ENCODE measurements at regions of chr9 and their contacts with region 1.

Region 1: GRCh38 chr9:99906403-99907207 is at the start of gene STX17:
- DNase-seq: peak; percentile 85
- ATAC-seq: peak; percentile 92
- H3K4me3 Mint-ChIP-seq: peak within 1 kb of the TSS; percentile 97
- H3K27ac Mint-ChIP-seq: peak within 1 kb of the TSS; percentile 96
- H3K4me1 Mint-ChIP-seq: peaks cover 26% of the 10 kb centered on the region
- H3K27me3 Mint-ChIP-seq: peaks cover 2% of the 10 kb centered on the region
- total RNA-seq, gene STX17: 32.8 to 35.2 TPM

Region 2: GRCh38 chr9:99221621-99222415 is 684.8 kb before region 1 on chr9 and contains the starts of genes ALG2 and SEC61B:
- CTCF ChIA-PET with region 1: no interaction called
- POLR2A ChIA-PET with region 1: no interaction called
- intact Hi-C with region 1: loop called in 1 of 2 experiments (anchors 2 kb)
- DNase-seq: peak; percentile 97
- ATAC-seq: peak; percentile 94
- H3K4me3 Mint-ChIP-seq: peak within 1 kb of the TSS; percentile 99
- H3K27ac Mint-ChIP-seq: peak within 1 kb of the TSS; percentile 99
- H3K4me1 Mint-ChIP-seq: peaks cover 67% of the 10 kb centered on the region
- H3K27me3 Mint-ChIP-seq: no peaks in the 10 kb centered on the region
- total RNA-seq, gene ALG2: 22.8 to 31.1 TPM
- total RNA-seq, gene SEC61B: 81.0 to 139 TPM

Region 3: GRCh38 chr9:99954819-99955218 is 48.2 kb after region 1 on chr9:
- CTCF ChIA-PET with region 1: no interaction called
- POLR2A ChIA-PET with region 1: no interaction called
- intact Hi-C with region 1: loop called in 1 of 2 experiments (anchors 1 kb)
- DNase-seq: no peak
- ATAC-seq: peak; percentile 91
- H3K4me3 Mint-ChIP-seq: no peak overlapping the region
- H3K27ac Mint-ChIP-seq: peak overlapping the region; percentile 47
- H3K4me1 Mint-ChIP-seq: peaks cover 28% of the 10 kb centered on the region
- H3K27me3 Mint-ChIP-seq: no peaks in the 10 kb centered on the region

Region 4: DNA sequence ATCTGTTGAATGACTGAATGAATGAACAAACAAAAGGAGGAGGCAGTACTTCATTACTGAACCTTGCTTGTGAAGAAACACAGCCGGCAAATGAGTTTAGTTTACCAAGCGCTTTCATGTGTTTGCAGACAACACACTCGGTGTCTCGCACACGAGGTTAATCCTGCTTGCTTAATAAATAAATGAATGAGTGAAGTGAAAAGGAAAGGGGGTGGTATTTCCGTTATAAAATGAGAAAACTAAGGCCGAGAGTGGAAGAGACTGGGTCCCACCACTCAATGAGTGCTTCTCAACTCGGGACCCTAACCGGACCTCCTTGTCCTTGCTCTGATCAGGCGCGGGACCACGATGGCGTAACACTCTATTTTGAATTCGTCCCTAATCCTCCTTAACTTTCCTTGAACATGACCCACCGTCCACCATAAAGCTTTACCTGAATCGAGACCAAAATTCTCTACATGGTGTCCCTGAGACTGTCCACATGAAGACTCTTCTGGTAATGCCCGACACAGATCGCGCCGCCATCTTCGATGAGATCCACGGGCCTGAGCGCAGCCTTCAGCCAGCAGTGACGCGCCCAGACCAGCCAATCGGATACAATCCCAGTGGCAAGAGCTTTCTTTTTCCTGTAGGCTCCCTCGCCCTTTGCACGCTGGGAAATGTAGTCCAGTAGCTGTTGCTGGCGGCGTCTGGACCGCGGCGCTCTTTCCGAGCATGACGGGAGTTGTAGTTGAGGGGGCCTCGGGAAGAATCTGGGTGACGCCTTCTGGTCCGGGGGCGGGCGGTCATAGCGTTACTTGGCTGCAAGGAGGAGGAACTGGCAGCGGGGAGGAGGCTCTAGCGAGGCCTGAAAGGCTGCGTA is 1491.7 kb after region 1 on chr9 and contains the starts of genes MRPL50 and ZNF189:
- CTCF ChIA-PET with region 1: no interaction called
- POLR2A ChIA-PET with region 1: no interaction called
- intact Hi-C with region 1: loop called in 1 of 2 experiments (anchors 5 kb)
- DNase-seq: peak; percentile 98
- ATAC-seq: peak; percentile 97
- H3K4me3 Mint-ChIP-seq: peak within 1 kb of the TSS; percentile 94
- H3K27ac Mint-ChIP-seq: peak within 1 kb of the TSS; percentile 100
- H3K4me1 Mint-ChIP-seq: peaks cover 67% of the 10 kb centered on the region
- H3K27me3 Mint-ChIP-seq: no peaks in the 10 kb centered on the region
- total RNA-seq, gene MRPL50: 15.5 to 17.0 TPM
- total RNA-seq, gene ZNF189: 10.2 to 13.1 TPM